Activated CD4-positive, alpha-beta T cell treated with anti-CD3 and anti-CD28 coated beads, Interleukin-2, amount 10 ng/mL, durations not matched to agents 24 days and 14 days (primary cell): ENCODE measurements at regions of chr21 and their contacts with region 1.

Region 1: GRCh38 chr21:44454747-44455523 is at the start of gene LRRC3:
- DNase-seq: peak; percentile 92
- H3K4me3 Mint-ChIP-seq: peak within 1 kb of the TSS; percentile 81
- H3K27ac Mint-ChIP-seq: peak within 1 kb of the TSS; percentile 67
- H3K4me1 Mint-ChIP-seq: peaks cover 2% of the 10 kb centered on the region
- H3K27me3 Mint-ChIP-seq: peaks cover 24% of the 10 kb centered on the region
- total RNA-seq, gene LRRC3: 2.3 and 2.4 TPM in 2 replicates

Region 2: DNA sequence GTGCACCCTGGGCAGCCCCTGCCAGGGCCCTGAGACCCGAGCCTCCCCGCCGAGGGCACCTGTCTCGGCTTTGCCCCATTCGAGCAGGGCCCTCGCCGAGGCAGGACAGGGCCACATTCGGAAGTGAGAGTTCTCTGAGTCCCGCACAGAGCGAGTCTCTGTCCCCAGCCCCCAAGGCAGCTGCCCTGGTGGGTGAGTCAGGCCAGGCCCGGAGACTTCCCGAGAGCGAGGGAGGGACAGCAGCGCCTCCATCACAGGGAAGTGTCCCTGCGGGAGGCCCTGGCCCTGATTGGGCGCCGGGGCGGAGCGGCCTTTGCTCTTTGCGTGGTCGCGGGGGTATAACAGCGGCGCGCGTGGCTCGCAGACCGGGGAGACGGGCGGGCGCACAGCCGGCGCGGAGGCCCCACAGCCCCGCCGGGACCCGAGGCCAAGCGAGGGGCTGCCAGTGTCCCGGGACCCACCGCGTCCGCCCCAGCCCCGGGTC is 169.4 kb before region 1 on chr21 and contains the start of gene AIRE:
- intact Hi-C with region 1: no loop called
- DNase-seq: no peak
- H3K4me3 Mint-ChIP-seq: no peak within 1 kb of the TSS
- H3K27ac Mint-ChIP-seq: no peak within 1 kb of the TSS
- H3K4me1 Mint-ChIP-seq: no peaks in the 10 kb centered on the region
- H3K27me3 Mint-ChIP-seq: no peaks in the 10 kb centered on the region
- total RNA-seq, gene AIRE: 0.05 TPM in 1 of 2 replicates, not detected in the other

Region 3: DNA sequence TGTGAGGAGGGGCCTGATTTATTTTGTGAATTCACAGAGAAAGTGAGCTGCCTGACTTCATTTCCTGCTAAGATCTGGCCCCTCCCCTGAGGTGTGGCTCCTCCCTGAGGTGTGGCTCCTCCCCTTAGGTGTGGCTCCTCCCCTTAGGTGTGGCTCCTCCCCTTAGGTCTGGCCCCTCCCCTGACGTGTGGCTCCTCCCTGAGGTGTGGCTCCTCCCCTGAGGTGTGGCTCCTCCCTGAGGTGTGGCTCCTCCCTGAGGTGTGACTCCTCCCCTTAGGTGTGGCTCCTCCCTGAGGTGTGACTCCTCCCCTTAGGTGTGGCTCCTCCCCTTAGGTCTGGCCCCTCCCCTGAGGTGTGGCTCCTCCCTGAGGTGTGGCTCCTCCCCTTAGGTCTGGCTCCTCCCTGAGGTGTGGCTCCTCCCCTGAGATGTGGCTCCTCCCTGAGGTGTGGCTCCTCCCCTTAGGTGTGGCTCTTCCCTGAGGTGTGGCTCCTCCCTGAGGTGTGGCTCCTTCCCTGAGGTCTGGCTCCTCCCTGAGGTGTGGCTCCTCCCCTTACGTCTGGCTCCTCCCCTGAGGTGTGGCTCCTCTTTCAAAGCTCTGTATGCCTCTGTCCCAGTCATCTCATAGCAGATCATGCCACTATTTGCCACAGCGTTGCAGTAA is 26.5 kb before region 1 on chr21:
- intact Hi-C with region 1: loop called (anchors 1 kb)
- DNase-seq: peak; percentile 88
- H3K4me3 Mint-ChIP-seq: no peak overlapping the region
- H3K27ac Mint-ChIP-seq: no peak overlapping the region
- H3K4me1 Mint-ChIP-seq: peaks cover 2% of the 10 kb centered on the region
- H3K27me3 Mint-ChIP-seq: no peaks in the 10 kb centered on the region

Region 4: DNA sequence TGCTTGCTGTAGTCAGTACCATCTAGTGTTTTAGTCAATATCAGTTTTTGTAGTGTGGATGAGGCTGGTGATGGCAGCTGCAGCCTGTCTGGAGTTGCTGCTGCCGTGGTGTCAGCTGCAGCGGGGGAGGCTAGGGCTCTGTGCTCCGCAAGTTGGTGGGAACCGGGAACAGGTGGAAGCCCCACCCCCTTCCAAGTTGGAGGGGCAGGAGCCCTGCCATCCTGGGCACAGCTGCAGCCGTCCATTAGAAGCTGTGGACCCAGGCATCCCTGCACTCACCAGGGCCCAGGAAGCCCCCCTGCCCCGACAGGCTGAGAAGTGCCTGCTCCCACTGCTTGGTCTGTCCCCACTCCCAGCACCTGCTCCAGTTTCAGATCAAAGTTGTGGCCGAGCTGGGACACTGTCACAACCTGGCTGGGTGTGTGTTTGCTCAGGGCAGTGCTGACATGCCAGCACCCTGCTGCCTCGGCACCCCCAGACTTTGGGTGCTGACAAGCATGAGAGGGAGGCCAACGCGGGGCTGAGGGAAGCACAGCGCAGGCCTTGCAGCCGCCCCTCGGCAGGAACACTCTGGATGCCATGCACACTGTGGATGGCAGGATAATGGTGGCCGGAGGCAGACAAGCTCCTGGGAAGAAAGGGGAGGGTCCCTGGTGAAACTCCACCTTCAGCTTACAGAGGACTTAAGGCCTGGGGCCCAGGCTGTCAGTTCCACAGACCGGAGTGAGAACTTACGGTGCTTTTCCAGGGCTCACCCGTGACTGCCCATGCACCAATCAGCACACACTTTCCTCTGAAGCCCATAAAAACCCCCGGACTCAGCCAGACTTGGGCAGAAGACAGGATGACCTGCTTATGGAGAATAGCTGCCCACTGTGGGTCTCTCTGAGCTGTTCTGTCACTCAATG is 706.4 kb after region 1 on chr21:
- intact Hi-C with region 1: no loop called
- DNase-seq: no peak
- H3K4me3 Mint-ChIP-seq: no peak overlapping the region
- H3K27ac Mint-ChIP-seq: no peak overlapping the region
- H3K4me1 Mint-ChIP-seq: no peaks in the 10 kb centered on the region
- H3K27me3 Mint-ChIP-seq: no peaks in the 10 kb centered on the region